Caco-2 (cell line): ENCODE measurements at regions of chr5 and their contacts with region 1.

Region 1: GRCh38 chr5:98975682-98976407 is 47.0 kb upstream of the CHD1 start:
- DNase-seq: no peak
- H3K4me3 ChIP-seq: no peak overlapping the region
- H3K4me3 Mint-ChIP-seq: no peak overlapping the region
- H3K27ac Mint-ChIP-seq: no peak overlapping the region
- H3K4me1 ChIP-seq: peaks cover 8% of the 10 kb centered on the region; the same call in 1 of the 2 replicates
- H3K4me1 Mint-ChIP-seq: peaks cover 8% of the 10 kb centered on the region
- H3K27me3 ChIP-seq: no peaks in the 10 kb centered on the region
- H3K27me3 Mint-ChIP-seq: no peaks in the 10 kb centered on the region
- CTCF ChIP-seq: no peak

Region 2: GRCh38 chr5:99543841-99544240 is 568.0 kb after region 1 on chr5:
- CTCF ChIA-PET with region 1: no interaction called
- POLR2A ChIA-PET with region 1: no interaction called
- intact Hi-C with region 1: loop called (anchors 5 kb)
- DNase-seq: no peak
- H3K4me3 ChIP-seq: no peak overlapping the region
- H3K4me3 Mint-ChIP-seq: no peak overlapping the region
- H3K27ac Mint-ChIP-seq: peak overlapping the region; percentile 42
- H3K4me1 ChIP-seq: peaks cover 14% of the 10 kb centered on the region
- H3K4me1 Mint-ChIP-seq: peaks cover 8% of the 10 kb centered on the region
- H3K27me3 ChIP-seq: no peaks in the 10 kb centered on the region
- H3K27me3 Mint-ChIP-seq: peaks cover 2% of the 10 kb centered on the region
- CTCF ChIP-seq: no peak